Mammary epithelial cell (primary cell): ENCODE measurements at regions of chr1 and their contacts with region 1.

Region 1: DNA sequence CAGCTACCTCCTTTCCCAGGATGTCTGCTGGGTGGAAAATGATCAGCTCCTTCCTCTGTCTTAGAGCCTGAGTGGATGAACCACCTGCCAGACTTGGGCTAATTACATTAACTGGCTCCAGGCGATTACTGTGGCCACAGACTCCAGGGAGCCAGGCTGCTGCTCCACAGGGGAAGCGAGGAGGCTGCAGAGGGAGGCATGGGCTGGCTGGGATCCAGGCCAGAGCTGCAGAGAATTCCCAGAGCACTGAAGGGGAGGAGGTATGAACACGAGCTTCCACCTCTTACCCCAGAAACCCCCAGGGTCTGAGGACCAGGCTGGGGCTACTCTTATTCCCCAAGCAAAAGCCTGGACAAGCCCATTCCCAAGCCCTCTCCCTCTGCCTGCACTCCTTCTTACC is 136.0 kb upstream of the KLHDC7A start:
- DNase-seq: no peak
- H3K4me3 ChIP-seq: no peak overlapping the region
- H3K27ac ChIP-seq: no peak overlapping the region
- H3K4me1 ChIP-seq: no peaks in the 10 kb centered on the region
- H3K27me3 ChIP-seq: no peaks in the 10 kb centered on the region
- CTCF ChIP-seq: no peak

Region 2: DNA sequence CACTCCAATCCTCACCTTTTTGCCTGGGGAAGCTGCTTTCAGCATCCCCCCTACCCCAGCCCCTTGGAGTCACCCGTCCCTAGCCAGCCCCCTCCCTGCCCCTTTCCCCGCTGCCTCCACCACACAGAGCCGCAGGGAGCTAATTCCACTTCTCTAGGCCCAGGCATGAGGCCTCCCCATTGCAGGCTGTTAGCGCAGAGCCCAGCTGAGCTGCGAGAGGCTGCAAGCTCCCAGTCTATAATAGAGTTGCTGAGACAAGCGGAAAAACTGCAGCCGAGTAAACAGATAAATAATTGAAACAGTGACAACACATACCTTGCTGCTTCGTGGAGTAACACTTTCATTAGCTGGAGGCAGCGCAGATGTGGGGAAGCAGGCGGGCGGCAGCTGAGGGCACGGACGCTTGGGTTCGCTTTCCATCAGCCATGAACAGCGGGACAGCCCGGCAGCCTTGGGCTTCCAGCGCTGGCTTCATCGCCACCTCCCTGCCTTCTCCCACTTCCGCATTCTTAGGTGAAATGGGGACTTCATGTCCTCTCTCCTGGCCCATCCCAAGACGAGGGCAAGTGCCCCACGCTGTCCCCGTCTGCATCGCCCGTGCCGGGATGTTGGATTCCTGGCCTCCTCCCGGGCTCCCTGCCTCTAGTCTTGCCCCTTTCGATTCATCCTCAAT is 53.9 kb before region 1 on chr1:
- CTCF ChIA-PET with region 1: no interaction called
- dilution Hi-C with region 1: loop called (anchors 5 kb)
- in situ Hi-C with region 1: no loop called
- intact Hi-C with region 1: no loop called
- DNase-seq: no peak
- H3K4me3 ChIP-seq: no peak overlapping the region
- H3K27ac ChIP-seq: no peak overlapping the region
- H3K4me1 ChIP-seq: no peaks in the 10 kb centered on the region
- H3K27me3 ChIP-seq: no peaks in the 10 kb centered on the region
- CTCF ChIP-seq: no peak